PC-9 (cell line): ENCODE measurements at regions of chr9 and their contacts with region 1.

Region 1: DNA sequence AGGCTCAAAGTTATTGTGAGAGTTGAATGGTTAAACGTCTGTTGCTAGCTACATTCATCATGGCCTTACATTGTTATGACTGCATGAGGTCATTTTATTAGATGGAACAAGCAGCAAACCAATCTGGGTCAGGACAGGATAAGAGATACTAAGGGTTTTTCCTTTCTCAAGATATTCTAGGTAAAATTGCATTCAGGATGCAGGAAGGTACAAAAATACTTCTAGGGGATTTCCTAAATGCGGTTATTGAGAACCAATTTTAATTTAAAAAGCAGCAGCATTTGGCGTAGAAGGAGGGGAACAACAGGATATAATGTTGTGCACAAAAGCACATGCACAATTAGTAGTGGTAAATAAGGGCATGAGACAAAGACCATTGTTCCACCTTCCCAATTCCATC is 39.2 kb upstream of the LURAP1L start:
- DNase-seq: no peak
- H3K4me3 ChIP-seq: no peak overlapping the region
- H3K27ac ChIP-seq: no peak overlapping the region
- H3K4me1 ChIP-seq: no peaks in the 10 kb centered on the region
- H3K27me3 ChIP-seq: no peaks in the 10 kb centered on the region
- CTCF ChIP-seq: no peak

Region 2: GRCh38 chr9:12833701-12834100 is 98.0 kb after region 1 on chr9:
- CTCF ChIA-PET with region 1: no interaction called
- POLR2A ChIA-PET with region 1: no interaction called
- intact Hi-C with region 1: no loop called
- DNase-seq: no peak
- H3K4me3 ChIP-seq: no peak overlapping the region
- H3K27ac ChIP-seq: no peak overlapping the region
- H3K4me1 ChIP-seq: no peaks in the 10 kb centered on the region
- H3K27me3 ChIP-seq: no peaks in the 10 kb centered on the region
- CTCF ChIP-seq: no peak

Region 3: DNA sequence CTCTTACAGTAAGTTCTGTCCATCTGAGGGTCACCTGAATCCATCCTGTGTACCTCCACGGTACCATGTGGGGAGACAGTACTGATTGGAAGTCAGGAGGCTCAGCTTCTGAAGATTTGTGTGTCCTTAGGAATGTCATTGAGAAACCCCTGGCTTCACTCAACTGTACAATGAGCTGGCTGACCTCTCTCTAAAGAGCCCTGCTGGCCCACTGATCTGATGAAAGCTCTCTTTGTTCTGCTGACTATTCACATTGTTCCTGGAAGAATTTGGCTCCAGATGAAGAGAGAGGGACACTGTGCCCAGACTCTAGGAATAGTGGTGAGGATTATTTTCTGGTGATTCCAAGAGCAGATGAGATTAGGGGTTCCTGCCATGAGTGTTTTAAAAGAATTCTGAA is 180.4 kb after region 1 on chr9:
- CTCF ChIA-PET with region 1: interaction called, 12 read pairs
- POLR2A ChIA-PET with region 1: no interaction called
- intact Hi-C with region 1: no loop called
- DNase-seq: no peak
- H3K4me3 ChIP-seq: no peak overlapping the region
- H3K27ac ChIP-seq: no peak overlapping the region
- H3K4me1 ChIP-seq: no peaks in the 10 kb centered on the region
- H3K27me3 ChIP-seq: no peaks in the 10 kb centered on the region
- CTCF ChIP-seq: no peak

Region 4: GRCh38 chr9:12993466-12993865 is 257.8 kb after region 1 on chr9:
- CTCF ChIA-PET with region 1: no interaction called
- POLR2A ChIA-PET with region 1: interaction called, 12 read pairs
- intact Hi-C with region 1: no loop called
- DNase-seq: no peak
- H3K4me3 ChIP-seq: no peak overlapping the region
- H3K27ac ChIP-seq: no peak overlapping the region
- H3K4me1 ChIP-seq: no peaks in the 10 kb centered on the region
- H3K27me3 ChIP-seq: no peaks in the 10 kb centered on the region
- CTCF ChIP-seq: no peak

Region 5: DNA sequence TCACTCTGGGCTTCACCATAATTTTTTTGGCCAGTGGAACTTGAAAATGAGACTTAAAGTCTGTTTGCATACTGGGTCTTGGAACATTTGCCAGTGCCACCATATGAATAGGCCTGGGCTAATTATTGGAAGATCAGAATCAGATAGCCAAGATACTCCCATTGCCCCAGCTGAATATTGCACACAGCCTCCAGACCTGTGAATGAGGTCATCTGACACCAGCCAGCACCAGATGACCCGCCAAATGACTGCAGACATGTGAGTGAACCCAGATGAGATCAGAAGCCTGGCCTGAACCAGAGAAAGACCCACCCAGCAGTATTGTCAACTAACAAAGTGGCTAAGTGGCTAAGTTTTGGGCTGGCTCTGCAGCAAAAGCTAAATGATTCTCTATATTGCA is 764.4 kb after region 1 on chr9:
- CTCF ChIA-PET with region 1: no interaction called
- POLR2A ChIA-PET with region 1: no interaction called
- intact Hi-C with region 1: no loop called
- DNase-seq: no peak
- H3K4me3 ChIP-seq: no peak overlapping the region
- H3K27ac ChIP-seq: no peak overlapping the region
- H3K4me1 ChIP-seq: no peaks in the 10 kb centered on the region
- H3K27me3 ChIP-seq: no peaks in the 10 kb centered on the region
- CTCF ChIP-seq: no peak